Sigmoid colon (tissue), 7 donors: ENCODE measurements at regions of chr18 and their contacts with region 1.

Region 1: GRCh38 chr18:9854801-9855676 is 30.7 kb upstream of the TXNDC2 start:
- DNase-seq: peak; percentile 87
- H3K4me3 ChIP-seq: peak overlapping the region in 2 of 4 donors; percentile 5 to 20
- H3K27ac ChIP-seq: peak overlapping the region; percentile 78 to 89 (median 86)
- H3K4me1 ChIP-seq: peaks cover 0 to 38% (median 32%) of the 10 kb centered on the region in 4 donors
- H3K27me3 ChIP-seq: no peaks in the 10 kb centered on the region
- CTCF ChIP-seq: no peak
- EP300 ChIP-seq: peak; percentile 87 to 99 (median 92)
- POLR2A ChIP-seq: no peak

Region 2: DNA sequence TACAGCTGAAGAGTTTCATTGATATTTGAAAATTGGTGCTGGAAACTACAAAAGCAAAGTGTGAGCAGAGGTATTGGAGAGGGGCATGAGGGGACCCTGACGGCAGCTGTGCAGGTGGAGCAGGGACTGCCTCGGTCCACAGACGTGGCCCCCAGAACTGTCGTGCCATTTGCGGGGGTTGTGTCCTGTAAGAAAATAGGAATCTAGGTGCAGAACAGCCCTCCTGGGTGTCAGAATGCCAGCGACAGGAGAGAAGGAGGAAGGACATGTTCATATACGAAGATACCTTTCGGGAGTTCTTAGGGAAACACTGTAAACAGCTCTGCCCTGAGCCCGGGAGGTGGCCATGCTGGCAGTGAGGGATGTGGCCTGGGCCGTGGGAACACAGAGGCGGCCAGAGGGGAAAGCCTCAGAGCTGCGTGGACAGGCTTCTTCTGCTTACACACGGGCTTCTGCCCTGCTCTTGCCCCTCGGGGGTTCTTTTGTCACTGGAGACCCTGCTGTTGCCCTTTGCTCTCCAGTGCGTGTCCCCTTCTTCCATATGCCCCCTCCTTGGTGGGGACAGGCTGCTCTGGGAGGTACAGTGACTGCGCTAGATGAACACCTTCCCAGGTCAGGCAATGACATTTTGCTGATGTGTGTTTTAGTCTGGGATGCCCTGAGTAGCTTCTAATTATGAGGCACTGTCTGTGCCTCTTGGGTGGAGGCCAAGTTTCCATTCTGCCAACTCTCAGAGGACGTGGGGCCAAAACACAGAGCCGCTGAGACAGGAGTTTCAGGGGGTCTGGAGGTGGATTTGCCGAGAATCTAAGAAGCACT is 51.1 kb before region 1 on chr18:
- intact Hi-C with region 1: loop called (anchors 2 kb)
- DNase-seq: peak; percentile 85
- H3K4me3 ChIP-seq: no peak overlapping the region
- H3K27ac ChIP-seq: peak overlapping the region; percentile 66 to 80 (median 76)
- H3K4me1 ChIP-seq: peaks cover 0 to 56% (median 52%) of the 10 kb centered on the region in 4 donors
- H3K27me3 ChIP-seq: no peaks in the 10 kb centered on the region
- CTCF ChIP-seq: no peak
- EP300 ChIP-seq: no peak
- POLR2A ChIP-seq: no peak

Region 3: DNA sequence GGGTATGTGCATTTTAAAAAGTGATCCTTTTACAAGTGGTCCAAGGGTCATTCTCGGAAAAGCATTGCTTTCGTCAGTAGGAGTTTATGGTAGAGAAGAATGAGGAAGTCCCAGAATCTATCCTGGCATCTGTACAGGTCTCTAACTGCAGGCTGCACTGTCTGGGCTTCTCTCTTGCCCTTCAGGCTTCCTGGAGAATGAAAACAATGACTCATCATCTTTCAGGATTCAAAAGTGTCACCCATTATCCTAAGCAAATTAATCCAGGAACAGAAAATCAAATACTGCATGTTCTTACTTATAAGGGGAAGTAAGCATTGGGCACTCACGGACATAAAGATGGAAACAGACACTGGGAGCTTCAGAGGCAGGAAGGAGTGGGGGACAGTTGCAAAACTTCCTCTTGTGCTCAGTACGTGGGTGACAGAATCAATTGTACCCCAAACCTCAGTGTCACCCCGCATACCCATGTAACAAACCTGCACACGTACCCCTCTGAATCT is 29.4 kb before region 1 on chr18:
- intact Hi-C with region 1: loop called (anchors 2 kb)
- DNase-seq: no peak
- H3K4me3 ChIP-seq: no peak overlapping the region
- H3K27ac ChIP-seq: peak overlapping the region; percentile 63 to 89 (median 81)
- H3K4me1 ChIP-seq: peaks cover 0 to 57% (median 55%) of the 10 kb centered on the region in 4 donors
- H3K27me3 ChIP-seq: no peaks in the 10 kb centered on the region
- CTCF ChIP-seq: no peak
- EP300 ChIP-seq: peak in 3 of 4 donors; percentile 36 to 79 (median 53)
- POLR2A ChIP-seq: no peak

Region 4: DNA sequence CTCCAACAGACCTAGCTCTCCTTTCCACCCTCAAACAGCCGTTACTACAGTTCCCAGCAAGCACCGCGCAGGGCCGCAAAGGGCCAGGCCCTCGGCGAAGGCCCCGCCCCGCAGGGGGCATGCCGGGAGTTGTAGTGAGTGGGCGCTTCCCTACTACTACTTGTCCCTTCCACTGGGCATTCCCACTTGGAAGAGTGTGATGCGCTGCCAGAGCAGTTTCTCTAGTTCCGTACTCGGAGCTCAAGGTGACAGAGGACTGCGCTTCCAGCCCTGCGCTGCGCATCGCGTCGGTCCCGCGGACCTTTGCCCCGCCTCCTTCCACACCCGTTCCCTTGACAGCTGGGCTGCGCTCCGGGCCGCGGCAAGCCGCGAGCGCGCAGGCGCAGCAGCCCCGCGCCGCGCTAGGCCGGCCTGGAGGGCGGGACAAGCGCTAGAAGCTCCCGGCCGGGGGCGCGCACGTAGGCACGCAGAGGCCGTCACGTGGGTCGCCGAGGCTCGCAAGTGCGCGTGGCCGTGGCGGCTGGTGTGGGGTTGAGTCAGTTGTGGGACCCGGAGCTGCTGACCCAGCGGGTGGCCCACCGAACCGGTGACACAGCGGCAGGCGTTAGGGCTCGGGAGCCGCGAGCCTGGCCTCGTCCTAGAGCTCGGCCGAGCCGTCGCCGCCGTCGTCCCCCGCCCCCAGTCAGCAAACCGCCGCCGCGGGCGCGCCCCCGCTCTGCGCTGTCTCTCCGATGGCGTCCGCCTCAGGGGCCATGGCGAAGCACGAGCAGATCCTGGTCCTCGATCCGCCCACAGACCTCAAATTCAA is 58.7 kb after region 1 on chr18 and contains the start of gene VAPA:
- intact Hi-C with region 1: loop called (anchors 2 kb)
- DNase-seq: peak; percentile 98
- H3K4me3 ChIP-seq: peak within 1 kb of the TSS; percentile 89 to 95 (median 90)
- H3K27ac ChIP-seq: peak within 1 kb of the TSS; percentile 98 to 100 (median 100)
- H3K4me1 ChIP-seq: peaks cover 0 to 41% (median 34%) of the 10 kb centered on the region in 4 donors
- H3K27me3 ChIP-seq: no peaks in the 10 kb centered on the region
- CTCF ChIP-seq: no peak
- EP300 ChIP-seq: no peak
- POLR2A ChIP-seq: peak; percentile 95
- total RNA-seq, gene VAPA: 252 to 336 (median 291) TPM

Region 5: DNA sequence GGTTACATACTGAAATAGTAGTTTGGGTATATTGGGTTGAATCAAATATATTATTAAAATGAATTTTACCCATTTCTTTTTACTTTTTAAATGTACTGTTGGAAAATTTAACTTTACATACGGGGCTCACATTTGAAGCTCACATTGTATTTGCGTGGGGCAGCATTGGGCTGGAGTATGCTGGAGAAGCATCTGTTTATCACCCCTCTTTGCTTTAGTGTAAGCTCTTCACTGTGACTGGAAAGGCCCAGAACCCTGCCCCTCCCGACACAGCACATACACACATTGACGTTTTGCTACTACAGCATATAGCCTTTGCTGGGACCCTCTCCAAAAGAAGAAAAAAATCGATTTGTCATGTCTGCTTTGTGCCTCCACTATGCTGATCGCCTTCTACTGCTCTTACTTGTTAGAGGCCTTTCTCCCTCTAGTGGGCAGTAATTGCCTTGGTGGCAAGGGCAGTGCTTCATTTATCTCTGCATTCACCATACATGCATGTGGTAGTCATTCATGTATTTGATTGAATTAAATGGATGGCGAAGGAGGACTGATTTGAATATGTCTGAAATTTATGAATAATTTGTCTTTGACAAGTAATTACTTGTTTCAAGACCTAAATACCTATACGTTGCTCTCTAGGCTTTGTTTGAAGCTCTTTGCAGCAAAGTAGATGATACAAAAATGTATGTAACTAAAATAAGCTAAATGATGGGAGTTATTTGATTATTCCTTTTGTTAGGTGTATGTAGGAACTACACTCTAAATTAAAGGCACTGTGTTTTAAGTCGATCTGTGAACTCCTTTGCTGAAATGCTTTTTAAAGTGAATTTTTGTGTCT is 96.2 kb after region 1 on chr18:
- intact Hi-C with region 1: no loop called
- DNase-seq: no peak
- H3K4me3 ChIP-seq: no peak overlapping the region
- H3K27ac ChIP-seq: peak overlapping the region in 1 of 4 donors; percentile 9
- H3K4me1 ChIP-seq: peaks cover 0 to 35% (median 17%) of the 10 kb centered on the region in 4 donors
- H3K27me3 ChIP-seq: no peaks in the 10 kb centered on the region
- CTCF ChIP-seq: peak; percentile 11 to 78 (median 58)
- EP300 ChIP-seq: no peak
- POLR2A ChIP-seq: no peak

Region 6: GRCh38 chr18:10121786-10122542 is 266.9 kb after region 1 on chr18:
- intact Hi-C with region 1: no loop called
- DNase-seq: no peak
- H3K4me3 ChIP-seq: no peak overlapping the region
- H3K27ac ChIP-seq: no peak overlapping the region
- H3K4me1 ChIP-seq: peaks cover 0 to 13% (median 12%) of the 10 kb centered on the region in 4 donors
- H3K27me3 ChIP-seq: no peaks in the 10 kb centered on the region
- CTCF ChIP-seq: no peak
- EP300 ChIP-seq: no peak
- POLR2A ChIP-seq: no peak